B cell (primary cell): ENCODE measurements at regions of chr19 and their contacts with region 1.

Region 1: DNA sequence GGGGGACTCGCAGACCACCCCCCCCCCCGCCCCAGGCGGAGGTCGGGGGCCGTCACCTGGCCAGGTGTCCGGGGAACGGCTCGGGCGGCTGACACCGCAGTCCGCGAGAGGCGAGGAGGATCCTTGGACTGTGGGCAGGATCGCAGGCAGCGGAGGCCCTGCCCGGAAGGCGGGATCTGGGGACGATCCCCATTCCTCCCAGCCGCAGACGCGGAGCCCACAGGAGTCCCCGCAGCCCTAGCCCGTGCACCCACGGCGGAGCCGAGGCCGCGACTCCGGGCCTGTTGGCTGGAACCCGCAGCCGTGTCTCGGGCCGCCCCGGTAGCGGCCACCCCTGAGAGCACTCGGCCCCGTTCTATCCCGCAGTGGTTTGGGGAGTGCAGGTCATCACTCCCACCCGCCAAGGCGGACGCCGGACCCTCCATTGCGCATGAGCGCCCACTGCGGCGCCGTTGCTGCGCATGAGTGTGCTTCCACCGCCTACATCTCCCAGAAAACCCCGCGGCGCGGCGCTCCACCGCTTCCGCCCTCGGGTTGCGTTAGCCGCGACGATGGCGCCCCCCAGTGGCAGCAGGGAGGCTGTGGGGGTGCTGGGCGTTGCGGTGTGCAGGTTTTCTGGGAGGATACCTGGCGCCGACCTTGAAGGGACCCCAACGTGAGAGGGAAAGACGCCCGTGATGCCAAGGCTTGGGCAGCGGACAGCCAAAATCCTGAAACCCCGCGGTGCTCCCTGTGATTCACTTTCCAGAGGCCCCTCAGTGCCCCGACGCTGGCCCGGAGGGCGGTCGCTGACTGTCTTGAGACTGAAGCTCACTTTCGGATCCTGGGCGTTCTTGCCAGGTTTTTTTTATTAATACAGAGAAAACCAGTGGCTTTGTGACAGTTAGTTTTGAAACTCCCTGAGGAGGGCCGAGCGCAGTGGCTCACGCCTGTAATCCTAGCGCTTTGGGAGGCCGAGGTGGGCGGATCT is 4.4 kb upstream of the ZNF329 start:
- DNase-seq: peak; percentile 96
- ATAC-seq: peak; percentile 87
- H3K4me3 ChIP-seq: peak overlapping the region; percentile 32 to 98 (median 91)
- H3K4me3 Mint-ChIP-seq: peak overlapping the region; percentile 88
- H3K27ac ChIP-seq: peak overlapping the region; percentile 82 to 91
- H3K27ac Mint-ChIP-seq: peak overlapping the region; percentile 90
- H3K4me1 ChIP-seq: peaks cover 12 to 26% of the 10 kb centered on the region in 2 donors
- H3K4me1 Mint-ChIP-seq: peaks cover 12% of the 10 kb centered on the region
- H3K27me3 ChIP-seq: no peaks in the 10 kb centered on the region
- H3K27me3 Mint-ChIP-seq: no peaks in the 10 kb centered on the region
- CTCF ChIP-seq: peak; percentile 94

Region 2: DNA sequence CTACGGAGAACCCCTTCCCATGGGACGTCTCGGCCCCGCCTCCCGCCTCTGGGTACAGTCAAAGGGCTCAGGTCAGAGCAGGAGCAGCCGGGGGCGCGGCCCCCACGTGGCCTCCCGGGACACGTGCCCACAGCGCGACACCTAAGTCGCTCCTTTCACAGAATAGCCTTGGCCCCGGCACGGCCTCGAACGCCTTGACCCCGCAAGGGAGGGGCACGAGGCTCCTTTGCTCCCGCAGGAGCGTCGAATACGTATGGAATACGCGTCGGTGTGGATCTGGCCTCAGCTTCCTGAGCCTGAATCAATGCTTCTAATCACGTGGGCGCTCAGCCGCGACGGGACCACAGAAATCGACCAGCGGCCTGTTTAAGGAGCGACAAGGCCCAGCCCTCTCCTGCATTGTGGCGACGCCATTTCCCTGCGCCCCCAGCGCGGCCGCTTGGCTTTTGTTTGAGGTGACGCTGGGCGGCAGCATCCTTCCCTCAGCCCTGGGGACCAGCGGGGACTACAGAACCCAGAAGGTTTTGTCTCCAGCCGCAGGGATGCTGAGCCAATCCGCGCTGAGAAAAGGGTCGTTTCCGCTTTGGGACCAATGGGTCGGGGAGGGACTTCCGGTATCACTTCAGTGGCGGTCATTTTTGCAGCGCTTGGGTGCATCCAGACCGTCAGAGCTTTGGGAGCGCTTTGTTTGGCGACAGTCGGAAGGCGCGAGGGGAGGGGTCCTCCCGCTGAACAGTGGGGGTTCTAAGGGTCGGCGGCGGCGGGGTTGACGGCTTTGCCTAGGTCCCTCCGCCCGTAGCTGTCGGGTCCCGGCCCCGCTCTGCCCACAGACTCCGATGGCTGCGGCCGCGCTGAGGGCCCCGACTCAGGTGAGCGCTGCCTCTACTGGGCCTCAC is 571.2 kb before region 1 on chr19 and contains the start of gene ZIK1:
- CTCF ChIA-PET with region 1: no interaction called
- POLR2A ChIA-PET with region 1: no interaction called
- intact Hi-C with region 1: loop called (anchors 10 kb)
- DNase-seq: peak; percentile 96
- ATAC-seq: peak; percentile 89
- H3K4me3 ChIP-seq: peak within 1 kb of the TSS; percentile 70 to 92 (median 77)
- H3K4me3 Mint-ChIP-seq: peak within 1 kb of the TSS; percentile 99
- H3K27ac ChIP-seq: peak within 1 kb of the TSS; percentile 86 to 88
- H3K27ac Mint-ChIP-seq: peak within 1 kb of the TSS; percentile 96
- H3K4me1 ChIP-seq: peaks cover 20 to 27% of the 10 kb centered on the region in 2 donors
- H3K4me1 Mint-ChIP-seq: peaks cover 21% of the 10 kb centered on the region
- H3K27me3 ChIP-seq: no peaks in the 10 kb centered on the region
- H3K27me3 Mint-ChIP-seq: no peaks in the 10 kb centered on the region
- CTCF ChIP-seq: no peak
- total RNA-seq, gene ZIK1: 19.2 and 21.8 TPM in 2 replicates

Region 3: GRCh38 chr19:57947208-57948134 is 207.5 kb before region 1 on chr19 and contains the start of gene ZNF256:
- CTCF ChIA-PET with region 1: no interaction called
- POLR2A ChIA-PET with region 1: no interaction called
- intact Hi-C with region 1: loop called (anchors 1 kb)
- DNase-seq: peak; percentile 95
- ATAC-seq: peak; percentile 99
- H3K4me3 ChIP-seq: peak within 1 kb of the TSS; percentile 71 to 90 (median 87)
- H3K4me3 Mint-ChIP-seq: peak within 1 kb of the TSS; percentile 96
- H3K27ac ChIP-seq: peak within 1 kb of the TSS; percentile 77 to 89
- H3K27ac Mint-ChIP-seq: peak within 1 kb of the TSS; percentile 89
- H3K4me1 ChIP-seq: peaks cover 16 to 27% of the 10 kb centered on the region in 2 donors
- H3K4me1 Mint-ChIP-seq: peaks cover 36% of the 10 kb centered on the region
- H3K27me3 ChIP-seq: peaks cover 0 to 6% (median 0%) of the 10 kb centered on the region in 4 experiments
- H3K27me3 Mint-ChIP-seq: peaks cover 6% of the 10 kb centered on the region
- CTCF ChIP-seq: peak; percentile 61
- total RNA-seq, gene ZNF256: 18.3 and 19.0 TPM in 2 replicates

Region 4: DNA sequence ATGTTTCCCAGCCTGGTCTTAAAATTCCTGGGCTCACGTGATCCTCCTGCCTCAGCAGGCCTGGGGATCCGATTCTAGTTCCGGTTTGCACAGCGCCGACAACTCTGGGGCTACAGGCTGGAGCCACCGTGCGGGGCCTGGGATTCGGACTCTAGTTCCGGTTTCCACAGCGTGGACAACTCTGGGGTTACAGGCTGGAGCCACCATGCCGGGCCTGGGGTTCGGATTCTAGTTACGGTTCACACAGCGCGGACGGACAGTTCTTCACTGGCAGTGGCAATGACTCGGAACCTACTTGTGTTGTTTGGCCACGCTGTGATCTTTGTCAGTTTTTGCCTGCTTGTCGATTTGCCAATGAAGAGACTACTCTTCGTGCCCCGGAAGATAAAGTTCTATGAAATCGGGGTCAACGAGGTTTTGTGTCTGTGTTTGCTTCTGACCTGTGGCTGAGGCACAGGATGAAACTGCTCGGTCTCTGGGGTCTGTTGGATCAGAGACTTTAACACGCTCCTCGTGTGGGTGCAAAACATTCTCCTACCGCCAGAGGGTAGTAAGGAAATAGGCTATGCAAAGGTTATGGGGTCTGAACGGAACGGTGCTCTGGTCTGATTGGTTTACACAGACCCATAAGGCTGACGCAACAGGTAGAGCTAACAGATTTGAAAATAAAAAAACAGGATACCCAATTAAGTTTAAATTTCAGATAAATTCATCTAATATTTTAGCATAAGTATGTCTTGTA is 133.3 kb before region 1 on chr19:
- CTCF ChIA-PET with region 1: interaction called, 7 read pairs
- POLR2A ChIA-PET with region 1: interaction called, 5 read pairs
- intact Hi-C with region 1: loop called (anchors 1 kb)
- DNase-seq: peak; percentile 83
- ATAC-seq: peak; percentile 99
- H3K4me3 ChIP-seq: no peak overlapping the region
- H3K4me3 Mint-ChIP-seq: no peak overlapping the region
- H3K27ac ChIP-seq: no peak overlapping the region
- H3K27ac Mint-ChIP-seq: no peak overlapping the region
- H3K4me1 ChIP-seq: no peaks in the 10 kb centered on the region
- H3K4me1 Mint-ChIP-seq: peaks cover 3% of the 10 kb centered on the region
- H3K27me3 ChIP-seq: peaks cover 0 to 7% (median 0%) of the 10 kb centered on the region in 4 experiments
- H3K27me3 Mint-ChIP-seq: no peaks in the 10 kb centered on the region
- CTCF ChIP-seq: peak; percentile 59

Region 5: DNA sequence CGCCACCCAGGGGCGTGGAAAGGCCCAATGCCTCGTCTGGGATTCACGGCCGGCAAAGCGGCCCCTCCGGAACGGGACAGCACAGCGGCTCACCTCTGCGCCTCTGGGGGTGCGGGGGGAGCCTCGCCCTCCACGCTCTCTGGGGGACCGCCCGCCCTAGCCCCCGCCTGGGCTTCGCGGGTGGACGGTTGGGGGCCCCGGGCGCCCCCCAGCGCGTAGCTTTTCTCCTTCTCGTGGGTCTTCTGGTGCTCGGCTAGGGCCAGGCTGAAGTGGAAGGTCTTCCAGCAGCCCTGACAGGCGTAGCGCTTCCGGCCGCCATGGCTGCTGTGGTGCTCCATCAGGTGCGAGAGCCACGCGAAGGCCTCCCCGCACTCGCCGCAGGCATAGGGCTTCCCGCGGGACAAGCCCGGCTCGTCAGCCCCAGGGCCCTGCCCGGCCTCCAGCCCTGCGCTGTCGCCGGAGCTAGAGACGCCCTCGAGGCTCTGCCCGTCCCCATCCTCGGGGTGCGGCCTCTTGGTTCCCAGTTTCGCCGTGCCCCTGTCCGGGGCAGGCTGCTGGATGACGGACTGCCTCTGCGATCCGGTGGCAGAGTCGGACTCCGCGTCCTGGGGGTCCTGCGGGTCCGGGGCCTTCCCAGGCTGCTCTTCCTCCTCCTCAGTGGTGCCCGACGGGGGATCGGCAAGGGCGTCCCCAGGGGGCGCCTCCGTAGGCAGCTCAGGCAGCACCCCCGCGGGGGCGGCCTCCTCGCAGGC is 70.2 kb before region 1 on chr19:
- CTCF ChIA-PET with region 1: no interaction called
- POLR2A ChIA-PET with region 1: no interaction called
- intact Hi-C with region 1: no loop called
- DNase-seq: no peak
- ATAC-seq: no peak
- H3K4me3 ChIP-seq: no peak overlapping the region
- H3K4me3 Mint-ChIP-seq: no peak overlapping the region
- H3K27ac ChIP-seq: no peak overlapping the region
- H3K27ac Mint-ChIP-seq: no peak overlapping the region
- H3K4me1 ChIP-seq: no peaks in the 10 kb centered on the region
- H3K4me1 Mint-ChIP-seq: no peaks in the 10 kb centered on the region
- H3K27me3 ChIP-seq: no peaks in the 10 kb centered on the region
- H3K27me3 Mint-ChIP-seq: no peaks in the 10 kb centered on the region
- CTCF ChIP-seq: no peak

Region 6: GRCh38 chr19:58097781-58098681 is 56.9 kb before region 1 on chr19 and contains the start of gene ZSCAN18:
- CTCF ChIA-PET with region 1: no interaction called
- POLR2A ChIA-PET with region 1: no interaction called
- intact Hi-C with region 1: loop called (anchors 1 kb)
- DNase-seq: peak; percentile 100
- ATAC-seq: peak; percentile 93
- H3K4me3 ChIP-seq: peak within 1 kb of the TSS; percentile 73 to 96 (median 92)
- H3K4me3 Mint-ChIP-seq: peak within 1 kb of the TSS; percentile 81
- H3K27ac ChIP-seq: peak within 1 kb of the TSS; percentile 98 to 100
- H3K27ac Mint-ChIP-seq: peak within 1 kb of the TSS; percentile 97
- H3K4me1 ChIP-seq: peaks cover 13 to 16% of the 10 kb centered on the region in 2 donors
- H3K4me1 Mint-ChIP-seq: peaks cover 18% of the 10 kb centered on the region
- H3K27me3 ChIP-seq: no peaks in the 10 kb centered on the region
- H3K27me3 Mint-ChIP-seq: peaks cover 3% of the 10 kb centered on the region
- CTCF ChIP-seq: no peak
- total RNA-seq, gene ZSCAN18: 84.9 and 90.5 TPM in 2 replicates

Region 7: DNA sequence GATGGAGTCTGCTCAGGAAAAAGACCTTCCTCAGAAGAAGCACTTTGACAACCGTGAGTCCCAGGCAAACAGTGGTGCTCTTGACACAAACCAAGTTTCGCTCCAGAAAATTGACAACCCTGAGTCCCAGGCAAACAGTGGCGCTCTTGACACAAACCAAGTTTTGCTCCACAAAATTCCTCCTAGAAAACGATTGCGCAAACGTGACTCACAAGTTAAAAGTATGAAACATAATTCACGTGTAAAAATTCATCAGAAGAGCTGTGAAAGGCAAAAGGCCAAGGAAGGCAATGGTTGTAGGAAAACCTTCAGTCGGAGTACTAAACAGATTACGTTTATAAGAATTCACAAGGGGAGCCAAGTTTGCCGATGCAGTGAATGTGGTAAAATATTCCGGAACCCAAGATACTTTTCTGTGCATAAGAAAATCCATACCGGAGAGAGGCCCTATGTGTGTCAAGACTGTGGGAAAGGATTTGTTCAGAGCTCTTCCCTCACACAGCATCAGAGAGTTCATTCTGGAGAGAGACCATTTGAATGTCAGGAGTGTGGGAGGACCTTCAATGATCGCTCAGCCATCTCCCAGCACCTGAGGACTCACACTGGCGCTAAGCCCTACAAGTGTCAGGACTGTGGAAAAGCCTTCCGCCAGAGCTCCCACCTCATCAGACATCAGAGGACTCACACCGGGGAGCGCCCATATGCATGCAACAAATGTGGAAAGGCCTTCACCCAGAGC is 57.5 kb after region 1 on chr19:
- CTCF ChIA-PET with region 1: no interaction called
- POLR2A ChIA-PET with region 1: no interaction called
- intact Hi-C with region 1: no loop called
- DNase-seq: no peak
- ATAC-seq: no peak
- H3K4me3 ChIP-seq: peak overlapping the region in 1 of 5 experiments; percentile 25
- H3K4me3 Mint-ChIP-seq: no peak overlapping the region
- H3K27ac ChIP-seq: no peak overlapping the region
- H3K27ac Mint-ChIP-seq: no peak overlapping the region
- H3K4me1 ChIP-seq: no peaks in the 10 kb centered on the region
- H3K4me1 Mint-ChIP-seq: no peaks in the 10 kb centered on the region
- H3K27me3 ChIP-seq: no peaks in the 10 kb centered on the region
- H3K27me3 Mint-ChIP-seq: no peaks in the 10 kb centered on the region
- CTCF ChIP-seq: no peak